Caco-2 (cell line): ENCODE measurements at regions of chr11 and their contacts with region 1.

Region 1: DNA sequence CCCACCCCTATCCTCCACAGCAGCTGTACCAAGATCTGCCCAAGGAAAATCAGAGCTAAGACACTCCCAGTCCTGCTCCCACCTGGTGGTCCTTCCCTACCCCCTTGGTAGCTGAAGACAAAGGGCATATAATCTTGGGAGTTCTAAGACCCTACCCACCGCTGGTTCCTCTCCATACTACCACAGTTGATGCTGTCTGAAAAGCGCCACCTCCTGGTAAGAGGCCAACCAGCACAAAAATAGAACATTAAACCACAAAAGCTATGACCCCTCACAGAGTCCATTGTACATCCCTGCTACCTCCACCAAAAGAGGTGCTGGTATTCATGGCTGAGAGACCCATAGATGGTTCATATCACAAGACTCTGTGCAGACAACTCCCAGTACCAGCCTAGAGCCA is 161.5 kb upstream of the ARHGAP42 start:
- DNase-seq: peak in 1 of 2 experiments; percentile 35
- H3K4me3 ChIP-seq: no peak overlapping the region
- H3K4me3 Mint-ChIP-seq: no peak overlapping the region
- H3K27ac Mint-ChIP-seq: no peak overlapping the region
- H3K4me1 ChIP-seq: no peaks in the 10 kb centered on the region
- H3K4me1 Mint-ChIP-seq: no peaks in the 10 kb centered on the region
- H3K27me3 ChIP-seq: no peaks in the 10 kb centered on the region
- H3K27me3 Mint-ChIP-seq: no peaks in the 10 kb centered on the region
- CTCF ChIP-seq: peak; percentile 19 to 44

Region 2: DNA sequence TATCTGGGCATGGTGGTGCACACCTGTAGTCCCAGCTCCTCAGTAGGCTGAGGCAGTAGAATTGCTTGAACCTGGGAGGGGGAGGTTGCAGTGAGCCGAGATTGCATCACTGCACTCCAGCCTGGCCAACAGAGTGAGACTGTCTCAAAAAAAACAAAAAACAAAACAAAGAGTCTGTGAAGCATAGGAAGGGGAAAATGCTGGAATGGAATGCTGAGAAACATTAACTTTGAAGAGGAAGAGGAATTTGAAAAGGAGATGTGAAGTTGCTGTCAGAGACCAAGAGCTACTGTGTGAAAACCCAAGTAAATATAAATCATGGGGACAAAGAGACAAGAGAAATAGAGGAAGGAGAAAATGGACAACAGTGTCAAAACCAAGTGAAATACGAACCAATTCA is 293.6 kb before region 1 on chr11:
- CTCF ChIA-PET with region 1: no interaction called
- POLR2A ChIA-PET with region 1: no interaction called
- intact Hi-C with region 1: loop called (anchors 1 kb)
- DNase-seq: no peak
- H3K4me3 ChIP-seq: no peak overlapping the region
- H3K4me3 Mint-ChIP-seq: no peak overlapping the region
- H3K27ac Mint-ChIP-seq: no peak overlapping the region
- H3K4me1 ChIP-seq: no peaks in the 10 kb centered on the region
- H3K4me1 Mint-ChIP-seq: no peaks in the 10 kb centered on the region
- H3K27me3 ChIP-seq: no peaks in the 10 kb centered on the region
- H3K27me3 Mint-ChIP-seq: peaks cover 3% of the 10 kb centered on the region
- CTCF ChIP-seq: no peak

Region 3: GRCh38 chr11:100328658-100329315 is 196.8 kb before region 1 on chr11:
- CTCF ChIA-PET with region 1: no interaction called
- POLR2A ChIA-PET with region 1: no interaction called
- intact Hi-C with region 1: loop called (anchors 1 kb)
- DNase-seq: peak; percentile 23 to 38
- H3K4me3 ChIP-seq: no peak overlapping the region
- H3K4me3 Mint-ChIP-seq: no peak overlapping the region
- H3K27ac Mint-ChIP-seq: no peak overlapping the region
- H3K4me1 ChIP-seq: no peaks in the 10 kb centered on the region; the same call in 1 of the 2 replicates
- H3K4me1 Mint-ChIP-seq: no peaks in the 10 kb centered on the region
- H3K27me3 ChIP-seq: no peaks in the 10 kb centered on the region
- H3K27me3 Mint-ChIP-seq: peaks cover 2% of the 10 kb centered on the region
- CTCF ChIP-seq: no peak